ENCODE measurements at regions of chr14 and their contacts with region 1.

Region 1: GRCh38 chr14:103546652-103547454 is 15.6 kb downstream of the BAG5 start:
- DNase-seq: peak; percentile 77 to 94 (median 83)
- H3K4me3 ChIP-seq: peak overlapping the region in 3 of 59 donors; percentile 3 to 24 (median 5)
- H3K27ac ChIP-seq: peak overlapping the region in 56 of 59 donors; percentile 1 to 99 (median 95)
- H3K27me3 ChIP-seq: no peaks in the 10 kb centered on the region
- CTCF ChIP-seq: peak; percentile 73 to 100 (median 97)

Region 2: DNA sequence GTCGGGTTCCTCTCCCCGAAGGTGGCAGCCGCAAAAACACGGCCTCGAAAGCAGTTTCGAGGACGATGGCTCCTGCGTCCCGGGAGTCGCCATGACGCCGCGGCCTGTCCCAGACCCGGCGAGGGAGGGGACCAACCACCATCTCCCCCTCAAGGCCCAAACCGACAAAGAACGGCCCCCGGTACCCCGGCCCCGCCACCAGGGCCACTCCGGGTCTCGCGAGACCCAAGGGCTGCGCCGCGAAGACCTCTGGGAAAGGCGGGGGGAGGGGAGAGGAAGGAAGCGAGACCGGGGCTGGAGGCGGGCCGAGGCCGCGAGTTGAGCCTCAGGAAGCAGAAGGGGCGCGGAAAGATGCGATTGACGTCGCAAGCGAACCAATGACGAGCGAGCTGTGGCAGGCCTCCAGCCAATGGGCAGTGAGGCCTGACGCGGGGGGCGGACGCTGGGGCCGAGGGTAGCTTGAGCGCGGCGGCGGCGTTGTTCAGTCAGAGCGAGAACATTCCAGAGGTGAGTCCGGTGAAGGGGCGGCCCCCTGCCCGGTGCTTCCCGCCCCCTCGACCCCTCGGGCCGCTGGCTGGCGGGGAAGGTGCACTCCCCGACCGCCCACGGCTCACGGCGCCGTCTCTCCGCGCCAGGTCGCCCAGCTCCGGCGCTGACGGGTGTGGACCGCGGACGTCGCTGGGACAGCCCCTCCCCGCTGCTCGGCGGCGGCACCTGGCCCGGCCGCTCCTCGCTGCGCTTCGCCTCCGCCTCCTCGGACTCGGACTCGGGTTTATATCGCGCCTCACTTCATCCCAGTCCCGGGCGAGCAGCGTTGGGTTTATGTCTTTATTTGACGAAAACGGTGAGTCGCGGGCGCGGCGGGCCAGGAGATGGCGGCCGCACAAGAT is 212.9 kb before region 1 on chr14 and contains the start of gene EIF5:
- intact Hi-C with region 1: no loop called
- DNase-seq: peak; percentile 98 to 100 (median 99)
- H3K4me3 ChIP-seq: peak within 1 kb of the TSS; percentile 59 to 99 (median 94)
- H3K27ac ChIP-seq: peak within 1 kb of the TSS; percentile 95 to 100 (median 100)
- H3K27me3 ChIP-seq: no peaks in the 10 kb centered on the region
- CTCF ChIP-seq: peak in 48 of 56 donors; percentile 11 to 60 (median 39)
- total RNA-seq, gene EIF5: 176 to 436 (median 299) TPM

Region 3: GRCh38 chr14:103391048-103391447 is 155.8 kb before region 1 on chr14:
- intact Hi-C with region 1: loop called in 1 of 2 experiments (anchors 10 kb)
- DNase-seq: peak in 1 of 10 donors; percentile 28
- H3K4me3 ChIP-seq: peak overlapping the region in 4 of 59 donors; percentile 2 to 15 (median 8)
- H3K27ac ChIP-seq: peak overlapping the region in 19 of 59 donors; percentile 0 to 61 (median 25)
- H3K27me3 ChIP-seq: no peaks in the 10 kb centered on the region
- CTCF ChIP-seq: peak in 55 of 56 donors; percentile 53 to 76 (median 66)

Region 4: DNA sequence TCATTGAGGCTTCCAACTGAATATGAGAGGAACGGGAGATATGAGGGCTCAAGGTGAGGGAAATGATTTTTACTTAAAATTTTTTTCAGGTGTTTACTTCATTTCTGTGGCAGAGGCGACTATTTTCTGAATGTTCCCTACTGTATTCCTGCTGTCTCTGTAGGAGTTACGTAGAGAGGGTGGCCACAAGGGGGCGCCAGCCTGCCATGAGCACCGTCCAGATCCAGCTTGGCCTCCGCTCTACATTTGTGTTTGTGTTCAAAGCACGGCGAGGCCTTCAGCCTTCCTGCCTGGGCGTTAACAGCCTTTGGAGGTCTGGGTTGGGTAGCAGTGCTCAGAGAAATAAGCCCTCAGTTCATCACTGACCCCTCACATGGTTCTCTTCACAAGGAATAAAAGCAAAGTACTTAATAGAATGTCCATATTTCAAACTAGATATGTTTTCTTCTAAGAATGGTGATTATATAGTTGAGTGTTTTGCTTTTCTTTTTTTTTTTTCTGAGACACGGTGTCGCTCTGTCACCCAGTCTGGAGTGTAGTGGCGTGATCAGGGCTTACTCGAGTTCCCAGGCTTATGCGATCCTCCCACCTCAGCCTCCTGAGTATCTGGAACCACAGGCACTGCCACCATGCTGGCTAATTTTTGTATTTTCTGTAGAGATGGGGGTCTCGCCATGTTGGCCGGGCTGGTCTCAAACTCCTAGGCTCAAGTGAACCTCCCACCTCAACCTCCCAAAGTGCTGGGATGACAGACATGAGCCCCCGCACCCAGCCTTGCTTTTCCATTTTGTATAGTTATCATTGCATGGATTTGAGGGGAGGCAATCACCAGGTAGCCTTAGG is 46.5 kb before region 1 on chr14:
- intact Hi-C with region 1: loop called (anchors 1 kb)
- DNase-seq: peak; percentile 94 to 98 (median 96)
- H3K4me3 ChIP-seq: peak overlapping the region in 5 of 59 donors; percentile 6 to 19 (median 10)
- H3K27ac ChIP-seq: peak overlapping the region; percentile 6 to 88 (median 78)
- H3K27me3 ChIP-seq: no peaks in the 10 kb centered on the region
- CTCF ChIP-seq: peak; percentile 78 to 98 (median 95)

Region 5: GRCh38 chr14:103520657-103521437 is 26.0 kb before region 1 on chr14:
- intact Hi-C with region 1: loop called (anchors 1 kb)
- DNase-seq: peak; percentile 73 to 85 (median 79)
- H3K4me3 ChIP-seq: peak overlapping the region; percentile 65 to 93 (median 84)
- H3K27ac ChIP-seq: peak overlapping the region; percentile 65 to 97 (median 93)
- H3K27me3 ChIP-seq: no peaks in the 10 kb centered on the region
- CTCF ChIP-seq: peak in 55 of 56 donors; percentile 28 to 85 (median 66)

Region 6: DNA sequence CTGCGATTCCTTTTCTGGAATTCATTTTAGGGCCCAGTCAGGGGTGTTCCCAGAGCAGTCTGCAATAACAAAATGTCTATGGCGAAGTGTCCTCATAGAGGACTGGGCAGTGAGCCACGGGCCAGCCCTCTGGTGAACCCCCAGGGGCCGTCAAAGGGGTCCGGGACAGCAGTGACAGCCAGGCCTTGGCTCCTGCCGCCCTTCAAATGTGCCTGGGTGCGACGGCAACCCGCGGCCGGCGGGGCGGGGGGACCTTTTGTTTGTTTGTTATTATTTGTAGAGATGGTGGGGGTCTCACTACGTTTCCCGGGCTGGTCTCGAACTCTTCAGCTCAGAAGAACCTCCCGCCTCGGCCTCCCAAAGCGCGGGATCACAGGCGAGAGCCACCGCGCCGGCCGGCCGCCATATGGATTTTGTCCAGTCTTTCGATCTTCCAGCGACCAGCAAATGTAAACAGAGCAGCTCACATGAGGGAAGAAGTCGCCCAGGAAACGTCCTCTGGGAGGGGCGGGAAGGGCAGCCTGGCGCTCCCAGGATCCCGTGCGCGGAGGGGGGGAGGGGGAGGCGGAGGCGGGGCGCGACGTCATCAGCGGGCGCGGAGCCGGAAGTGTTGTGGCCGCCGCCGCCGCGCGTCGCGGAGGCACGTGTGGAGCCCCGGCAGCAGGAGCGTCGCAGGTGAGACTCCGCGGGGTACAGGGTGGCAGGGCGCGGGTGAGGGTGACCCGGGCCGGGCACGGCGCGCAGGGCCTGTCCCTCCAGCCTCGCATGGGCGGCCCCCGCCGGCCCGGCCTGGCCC is 18.1 kb before region 1 on chr14 and contains the start of gene TRMT61A:
- intact Hi-C with region 1: loop called in 1 of 2 experiments (anchors 2 kb)
- DNase-seq: peak; percentile 71 to 89 (median 86)
- H3K4me3 ChIP-seq: peak within 1 kb of the TSS; percentile 66 to 99 (median 93)
- H3K27ac ChIP-seq: peak within 1 kb of the TSS; percentile 89 to 100 (median 99)
- H3K27me3 ChIP-seq: no peaks in the 10 kb centered on the region
- CTCF ChIP-seq: peak in 23 of 56 donors; percentile 4 to 44 (median 27)
- total RNA-seq, gene TRMT61A: 9.8 to 20.3 (median 14.3) TPM